ENCODE measurements at regions of chr4 and their contacts with region 1.

Region 1: GRCh38 chr4:185597532-185598188 is 62.4 kb upstream of the PDLIM3 start:
- DNase-seq: peak; percentile 42 to 60 (median 56)
- ATAC-seq: peak; percentile 87
- H3K4me3 ChIP-seq: no peak overlapping the region
- H3K4me3 Mint-ChIP-seq: no peak overlapping the region
- H3K27ac ChIP-seq: no peak overlapping the region
- H3K27ac Mint-ChIP-seq: no peak overlapping the region
- H3K4me1 ChIP-seq: no peaks in the 10 kb centered on the region
- H3K4me1 Mint-ChIP-seq: peaks cover 0 to 4% (median 0%) of the 10 kb centered on the region in 7 donors
- H3K27me3 ChIP-seq: peaks cover 4 to 5% of the 10 kb centered on the region in 2 donors
- H3K27me3 Mint-ChIP-seq: peaks cover 18 to 33% (median 25%) of the 10 kb centered on the region in 5 donors

Region 2: GRCh38 chr4:185209031-185209851 is 388.4 kb before region 1 on chr4 and contains the start of gene SNX25:
- CTCF ChIA-PET with region 1: no interaction called
- POLR2A ChIA-PET with region 1: no interaction called
- intact Hi-C with region 1: loop called (anchors 5 kb)
- DNase-seq: peak; percentile 77 to 93 (median 83)
- ATAC-seq: peak; percentile 96
- H3K4me3 ChIP-seq: peak within 1 kb of the TSS; percentile 81
- H3K4me3 Mint-ChIP-seq: peak within 1 kb of the TSS; percentile 87 to 95 (median 93)
- H3K27ac ChIP-seq: peak within 1 kb of the TSS; percentile 39
- H3K27ac Mint-ChIP-seq: peak within 1 kb of the TSS; percentile 82 to 93 (median 91)
- H3K4me1 ChIP-seq: peaks cover 27 to 28% of the 10 kb centered on the region in 2 donors
- H3K4me1 Mint-ChIP-seq: peaks cover 31 to 56% (median 47%) of the 10 kb centered on the region in 7 donors
- H3K27me3 ChIP-seq: no peaks in the 10 kb centered on the region
- H3K27me3 Mint-ChIP-seq: peaks cover 0 to 15% (median 0%) of the 10 kb centered on the region in 5 donors
- total RNA-seq, gene SNX25: 8.0 to 18.9 (median 14.3) TPM

Region 3: GRCh38 chr4:185587427-185588161 is 10.1 kb before region 1 on chr4:
- CTCF ChIA-PET with region 1: interaction called, 10 read pairs
- POLR2A ChIA-PET with region 1: no interaction called
- intact Hi-C with region 1: no loop called
- DNase-seq: peak; percentile 22 to 91 (median 73)
- ATAC-seq: peak; percentile 92
- H3K4me3 ChIP-seq: peak overlapping the region; percentile 2
- H3K4me3 Mint-ChIP-seq: peak overlapping the region; percentile 67 to 86 (median 78)
- H3K27ac ChIP-seq: no peak overlapping the region
- H3K27ac Mint-ChIP-seq: peak overlapping the region in 8 of 9 donors; percentile 31 to 94 (median 84)
- H3K4me1 ChIP-seq: no peaks in the 10 kb centered on the region
- H3K4me1 Mint-ChIP-seq: peaks cover 8 to 20% (median 14%) of the 10 kb centered on the region in 7 donors
- H3K27me3 ChIP-seq: peaks cover 0 to under 1% of the 10 kb centered on the region in 2 donors
- H3K27me3 Mint-ChIP-seq: peaks cover 58 to 61% (median 60%) of the 10 kb centered on the region in 5 donors